Activated CD8-positive, alpha-beta T cell treated with anti-CD3 and anti-CD28 coated beads, Interleukin-2, amount 10 ng/mL, durations not matched to agents 7 days and 5 days (primary cell): ENCODE measurements at regions of chr1 and their contacts with region 1.

Region 1: GRCh38 chr1:2194898-2195673 is 514 bp upstream of the FAAP20 start:
- DNase-seq: peak; percentile 92
- ATAC-seq: peak; percentile 81
- H3K4me3 Mint-ChIP-seq: peak overlapping the region; percentile 81
- H3K27ac Mint-ChIP-seq: peak overlapping the region; percentile 93
- H3K4me1 Mint-ChIP-seq: peaks cover 46% of the 10 kb centered on the region
- H3K27me3 Mint-ChIP-seq: no peaks in the 10 kb centered on the region

Region 2: DNA sequence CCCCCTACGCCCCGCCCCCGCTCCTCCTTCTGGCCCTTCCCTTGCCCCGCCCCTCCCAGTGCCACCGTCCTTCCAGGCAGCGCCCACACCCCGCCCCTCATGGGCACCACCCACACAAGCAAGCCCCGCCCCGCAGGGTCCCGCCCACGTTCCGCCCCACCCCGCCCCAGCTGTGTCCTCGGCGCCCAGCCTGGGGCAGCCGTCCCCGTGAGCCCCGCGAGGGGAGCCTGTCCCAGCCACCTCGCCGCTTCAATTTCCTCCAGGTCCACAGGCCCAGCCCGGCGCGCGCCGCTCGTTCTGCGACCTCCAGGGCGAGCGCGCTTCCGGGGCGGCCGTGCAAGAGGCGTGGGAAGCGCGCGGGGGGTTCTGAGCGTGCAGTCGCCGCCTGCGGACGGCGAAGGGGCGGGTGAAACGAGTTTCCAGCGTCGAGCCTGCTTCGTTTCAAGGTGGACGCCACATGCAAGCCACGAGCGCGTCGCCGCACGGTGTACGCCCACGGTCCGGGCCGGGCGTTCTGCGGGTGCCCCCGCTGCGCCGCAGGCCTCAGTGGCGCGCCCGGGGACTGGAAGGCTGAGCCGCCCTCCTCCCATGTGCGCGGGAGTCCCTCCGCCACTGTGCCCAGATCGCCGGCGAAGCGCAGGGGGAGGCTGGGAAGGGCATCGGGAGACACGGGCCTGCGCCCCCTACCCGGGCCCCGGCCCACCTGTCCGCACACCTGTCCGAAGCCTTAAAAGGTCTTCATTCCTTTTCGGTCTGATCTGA is 10.3 kb after region 1 on chr1:
- CTCF ChIA-PET with region 1: interaction called, 15 read pairs
- POLR2A ChIA-PET with region 1: interaction called, 9 read pairs
- DNase-seq: peak; percentile 96
- ATAC-seq: peak; percentile 89
- H3K4me3 Mint-ChIP-seq: peak overlapping the region; percentile 55
- H3K27ac Mint-ChIP-seq: peak overlapping the region; percentile 61
- H3K4me1 Mint-ChIP-seq: peaks cover 10% of the 10 kb centered on the region
- H3K27me3 Mint-ChIP-seq: no peaks in the 10 kb centered on the region

Region 3: GRCh38 chr1:2233997-2234761 is 39.1 kb after region 1 on chr1:
- CTCF ChIA-PET with region 1: interaction called, 31 read pairs
- POLR2A ChIA-PET with region 1: interaction called, 6 read pairs
- DNase-seq: peak; percentile 90
- ATAC-seq: peak; percentile 73
- H3K4me3 Mint-ChIP-seq: peak overlapping the region; percentile 77
- H3K27ac Mint-ChIP-seq: peak overlapping the region; percentile 90
- H3K4me1 Mint-ChIP-seq: peaks cover 78% of the 10 kb centered on the region
- H3K27me3 Mint-ChIP-seq: no peaks in the 10 kb centered on the region

Region 4: DNA sequence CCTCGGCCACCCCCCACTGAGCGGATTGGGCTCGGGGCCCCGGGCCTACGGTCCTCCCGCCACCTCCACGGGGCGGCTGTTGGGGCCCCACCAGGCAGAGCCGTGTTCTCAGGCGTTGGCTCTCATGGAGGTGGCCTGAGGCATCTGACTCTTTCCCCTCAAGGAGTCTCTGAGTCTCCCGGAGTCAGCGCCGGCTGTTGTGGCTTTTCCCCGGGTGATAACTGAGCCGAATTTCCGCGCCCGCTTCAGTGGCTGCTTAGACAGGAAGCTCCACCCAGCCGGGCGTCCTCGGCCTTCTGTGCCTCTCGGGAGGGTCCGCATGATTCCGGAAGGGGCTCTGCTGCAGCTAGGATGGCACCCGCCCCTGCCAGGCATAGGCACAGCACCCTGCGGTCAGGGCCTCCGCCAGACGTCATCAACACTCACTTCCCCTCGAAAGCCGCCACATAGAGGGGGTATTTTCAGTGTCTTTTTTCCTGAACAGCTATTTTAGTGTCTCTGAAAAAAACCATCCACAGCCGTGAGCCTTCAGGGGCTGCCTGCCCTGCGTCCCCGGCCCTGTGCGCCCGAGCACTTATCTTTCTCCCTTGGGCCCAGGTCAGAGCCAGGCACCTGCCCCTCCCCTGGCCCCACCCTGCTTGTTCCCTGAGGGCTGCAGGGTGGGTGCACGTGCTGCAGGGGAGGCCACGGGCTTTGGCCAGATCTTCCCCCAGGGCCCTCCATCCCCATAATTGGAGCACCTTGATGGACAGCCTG is 105.9 kb after region 1 on chr1:
- CTCF ChIA-PET with region 1: interaction called, 15 read pairs
- POLR2A ChIA-PET with region 1: interaction called, 5 read pairs
- DNase-seq: peak; percentile 94
- ATAC-seq: peak; percentile 72
- H3K4me3 Mint-ChIP-seq: peak overlapping the region; percentile 73
- H3K27ac Mint-ChIP-seq: peak overlapping the region; percentile 99
- H3K4me1 Mint-ChIP-seq: peaks cover 59% of the 10 kb centered on the region
- H3K27me3 Mint-ChIP-seq: no peaks in the 10 kb centered on the region

Region 5: DNA sequence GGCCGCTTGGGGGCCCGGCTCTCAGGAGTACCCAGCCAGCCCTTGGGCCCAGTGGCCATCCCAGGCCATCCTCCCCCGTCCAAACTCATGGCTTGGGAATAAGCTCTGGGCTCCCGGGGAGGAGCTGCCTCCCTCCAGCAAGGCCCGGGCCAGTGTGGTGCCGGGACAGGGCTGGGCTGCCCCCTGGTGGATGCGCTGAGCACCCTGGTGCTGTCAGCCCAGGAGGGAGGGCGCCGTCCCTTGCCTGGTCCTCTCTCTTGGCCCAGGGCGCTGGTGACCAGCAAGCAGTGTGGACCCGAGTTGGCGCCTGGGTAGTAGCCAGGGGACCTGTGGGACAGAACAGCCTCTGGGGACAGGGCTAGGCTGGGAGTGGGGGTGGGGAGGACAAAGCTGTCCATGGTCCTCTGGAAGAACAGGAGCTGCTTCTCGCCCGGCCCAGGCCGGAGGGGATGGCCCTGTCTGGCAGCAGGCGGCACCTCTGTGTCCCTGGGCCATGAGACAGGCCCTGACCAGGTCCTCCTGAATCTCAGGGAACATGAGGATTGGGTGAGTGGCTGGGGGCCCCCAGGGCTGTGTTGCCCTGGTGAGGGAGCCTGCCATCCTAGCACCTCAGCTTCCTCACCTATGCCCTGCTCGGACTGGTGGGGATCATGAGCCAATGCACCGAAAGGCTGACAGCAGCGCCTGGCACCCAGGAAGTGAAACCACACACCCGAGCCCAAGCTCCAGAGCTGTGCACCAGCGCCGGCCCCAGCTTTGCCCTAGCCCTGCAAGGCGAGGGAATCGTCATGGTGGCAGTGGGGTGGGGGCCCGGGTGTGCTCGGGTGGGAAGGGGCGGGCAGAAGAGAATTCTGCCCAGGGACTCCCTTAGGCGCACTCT is 186.9 kb after region 1 on chr1:
- CTCF ChIA-PET with region 1: interaction called, 259 read pairs
- POLR2A ChIA-PET with region 1: interaction called, 31 read pairs
- DNase-seq: peak; percentile 81
- ATAC-seq: peak; percentile 97
- H3K4me3 Mint-ChIP-seq: no peak overlapping the region
- H3K27ac Mint-ChIP-seq: no peak overlapping the region
- H3K4me1 Mint-ChIP-seq: peaks cover 9% of the 10 kb centered on the region
- H3K27me3 Mint-ChIP-seq: no peaks in the 10 kb centered on the region

Region 6: DNA sequence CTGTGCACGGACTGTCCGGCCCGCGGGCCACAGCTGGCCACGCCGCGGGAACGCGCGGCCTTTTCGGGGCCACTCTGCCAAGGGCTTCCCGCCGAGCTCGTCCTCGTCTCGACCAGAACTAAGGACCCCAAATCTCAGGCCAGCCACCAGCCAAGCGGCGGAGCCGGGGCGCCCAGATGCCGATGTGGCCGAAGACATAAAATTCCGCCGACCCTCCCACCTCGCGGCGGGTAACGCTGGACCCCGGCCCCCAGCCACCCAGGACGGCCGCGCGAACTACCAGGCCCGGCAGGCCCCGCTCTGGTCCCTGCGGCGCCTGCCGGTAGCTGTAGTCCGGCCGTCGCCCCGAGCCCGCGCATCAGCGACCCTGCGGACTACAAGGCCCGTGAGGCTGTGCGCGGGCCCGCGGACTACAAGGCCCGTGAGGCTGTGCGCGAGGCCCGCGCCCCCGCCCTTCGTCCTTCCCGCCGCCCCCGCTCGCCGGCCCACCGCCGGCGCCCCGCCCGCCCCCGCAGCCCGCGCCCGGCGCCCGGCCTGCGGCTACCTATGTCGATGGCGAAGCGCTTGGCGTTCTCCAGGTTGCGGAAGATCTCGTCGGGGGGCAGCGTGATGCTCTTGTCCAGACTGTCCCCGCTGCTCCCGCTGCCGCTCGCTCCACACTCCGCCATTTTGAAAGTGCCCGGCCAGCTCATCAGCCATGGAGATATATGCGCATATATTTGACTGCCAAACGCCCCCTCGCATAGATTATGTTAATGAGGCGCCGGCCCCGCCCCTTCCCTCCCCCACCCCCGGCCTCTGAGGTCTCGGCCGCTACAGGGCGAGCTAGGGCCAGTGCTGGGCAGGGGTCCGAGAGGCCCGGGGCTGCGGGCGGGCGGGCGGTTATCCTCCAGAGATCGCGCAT is 331.1 kb after region 1 on chr1 and contains the start of gene PANK4:
- CTCF ChIA-PET with region 1: interaction called, 10 read pairs
- POLR2A ChIA-PET with region 1: no interaction called
- DNase-seq: peak; percentile 93
- ATAC-seq: peak; percentile 89
- H3K4me3 Mint-ChIP-seq: peak within 1 kb of the TSS; percentile 81
- H3K27ac Mint-ChIP-seq: peak within 1 kb of the TSS; percentile 94
- H3K4me1 Mint-ChIP-seq: peaks cover 49% of the 10 kb centered on the region
- H3K27me3 Mint-ChIP-seq: peaks cover 19% of the 10 kb centered on the region
- total RNA-seq, gene PANK4: 55.9 to 66.8 TPM